ENCODE measurements at regions of chr15 and their contacts with region 1.

Region 1: GRCh38 chr15:65304389-65305144 is at the start of gene RNU5B-1:
- DNase-seq: peak; percentile 76
- ATAC-seq: peak; percentile 75
- H3K4me3 Mint-ChIP-seq: peak within 1 kb of the TSS; percentile 90
- H3K27ac Mint-ChIP-seq: peak within 1 kb of the TSS; percentile 94
- H3K4me1 Mint-ChIP-seq: peaks cover 20% of the 10 kb centered on the region
- H3K27me3 Mint-ChIP-seq: peaks cover 1% of the 10 kb centered on the region
- total RNA-seq, gene RNU5B-1: 27.2 to 27.3 TPM

Region 2: DNA sequence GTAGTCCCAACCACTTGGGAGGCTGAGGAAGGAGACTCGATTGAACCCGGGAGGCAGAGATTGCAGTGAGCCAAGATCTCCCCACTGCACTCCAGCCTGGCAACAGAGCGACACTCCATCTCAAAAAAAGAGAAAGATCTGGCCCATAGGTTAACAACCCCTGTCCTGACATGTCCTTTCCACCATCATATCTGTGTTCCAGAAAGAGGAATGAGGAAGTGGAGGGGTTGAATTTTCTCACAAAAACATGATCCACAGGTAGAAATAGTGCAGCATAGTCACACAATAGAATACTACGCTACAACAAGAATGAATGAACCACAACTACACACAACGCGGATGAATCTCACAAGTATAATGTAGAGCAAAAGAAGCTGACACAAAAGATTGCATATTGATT is 264.1 kb before region 1 on chr15:
- POLR2A ChIA-PET with region 1: no interaction called
- DNase-seq: no peak
- ATAC-seq: no peak
- H3K4me3 Mint-ChIP-seq: no peak overlapping the region
- H3K27ac Mint-ChIP-seq: no peak overlapping the region
- H3K4me1 Mint-ChIP-seq: no peaks in the 10 kb centered on the region
- H3K27me3 Mint-ChIP-seq: peaks cover 7% of the 10 kb centered on the region

Region 3: GRCh38 chr15:65184868-65185738 is 119.5 kb before region 1 on chr15 and contains the start of gene CLPX:
- POLR2A ChIA-PET with region 1: interaction called, 49 read pairs
- DNase-seq: peak; percentile 88
- ATAC-seq: peak; percentile 97
- H3K4me3 Mint-ChIP-seq: peak within 1 kb of the TSS; percentile 99
- H3K27ac Mint-ChIP-seq: peak within 1 kb of the TSS; percentile 92
- H3K4me1 Mint-ChIP-seq: peaks cover 21% of the 10 kb centered on the region
- H3K27me3 Mint-ChIP-seq: no peaks in the 10 kb centered on the region
- total RNA-seq, gene CLPX: 45.8 to 47.4 TPM

Region 4: DNA sequence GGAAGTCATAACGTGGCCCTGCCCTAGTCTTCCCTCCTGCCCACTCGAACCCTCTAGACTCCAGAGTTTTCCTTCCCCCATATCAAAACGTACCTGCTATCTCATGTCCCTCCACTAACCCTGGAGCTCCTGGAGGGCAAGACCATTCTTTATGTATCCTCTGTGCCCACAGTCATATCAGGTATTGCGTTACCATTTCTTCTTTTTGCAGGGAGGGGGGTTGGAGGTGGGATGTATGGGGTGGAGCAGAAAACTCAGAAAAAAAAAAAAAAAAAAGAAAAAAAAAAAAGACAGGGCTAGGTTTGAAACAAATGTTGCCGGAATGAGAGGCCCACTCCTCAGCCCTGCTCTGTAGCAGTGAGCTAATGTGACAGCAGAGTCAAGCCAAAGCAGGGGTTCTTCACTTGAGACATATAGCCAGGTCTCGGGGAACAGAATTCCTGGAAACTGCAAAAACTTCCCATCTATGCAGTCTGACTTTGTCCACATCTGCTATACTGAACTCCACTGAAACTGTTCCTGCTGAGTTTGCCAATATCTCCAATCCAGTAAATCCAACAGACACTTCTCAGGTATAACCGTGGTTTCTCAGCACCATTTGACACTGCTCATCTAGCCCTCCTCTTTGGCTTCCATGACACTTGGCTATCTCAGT is 49.0 kb before region 1 on chr15:
- POLR2A ChIA-PET with region 1: no interaction called
- DNase-seq: no peak
- ATAC-seq: no peak
- H3K4me3 Mint-ChIP-seq: no peak overlapping the region
- H3K27ac Mint-ChIP-seq: no peak overlapping the region
- H3K4me1 Mint-ChIP-seq: peaks cover 2% of the 10 kb centered on the region
- H3K27me3 Mint-ChIP-seq: no peaks in the 10 kb centered on the region

Region 5: DNA sequence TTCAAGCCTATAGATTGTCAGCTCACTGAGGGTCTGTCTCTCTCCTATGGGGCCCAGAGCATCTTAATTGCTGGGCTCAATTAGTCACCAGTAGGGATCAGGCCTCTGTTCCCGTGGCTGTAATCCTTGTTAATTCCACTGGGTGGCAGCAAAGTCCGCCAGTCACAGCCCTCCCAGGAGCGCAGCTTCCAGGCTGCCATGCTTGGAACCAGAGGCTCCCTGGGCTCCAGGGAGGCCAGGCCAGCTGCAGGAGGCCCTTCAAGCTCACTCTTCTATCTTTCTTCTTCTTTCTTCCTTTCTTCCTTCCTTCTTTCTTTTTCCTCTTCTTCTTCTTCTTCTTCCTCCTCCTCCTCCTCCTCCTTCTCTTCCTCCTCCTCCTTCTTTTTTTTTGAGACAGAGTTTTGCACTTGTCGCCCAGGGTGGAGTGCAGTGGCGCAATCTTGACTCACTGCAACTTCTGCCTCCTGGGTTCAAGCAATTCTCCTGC is 14.3 kb after region 1 on chr15:
- POLR2A ChIA-PET with region 1: interaction called, 23 read pairs
- DNase-seq: peak; percentile 75
- ATAC-seq: peak; percentile 96
- H3K4me3 Mint-ChIP-seq: no peak overlapping the region
- H3K27ac Mint-ChIP-seq: no peak overlapping the region
- H3K4me1 Mint-ChIP-seq: no peaks in the 10 kb centered on the region
- H3K27me3 Mint-ChIP-seq: peaks cover 24% of the 10 kb centered on the region

Region 6: DNA sequence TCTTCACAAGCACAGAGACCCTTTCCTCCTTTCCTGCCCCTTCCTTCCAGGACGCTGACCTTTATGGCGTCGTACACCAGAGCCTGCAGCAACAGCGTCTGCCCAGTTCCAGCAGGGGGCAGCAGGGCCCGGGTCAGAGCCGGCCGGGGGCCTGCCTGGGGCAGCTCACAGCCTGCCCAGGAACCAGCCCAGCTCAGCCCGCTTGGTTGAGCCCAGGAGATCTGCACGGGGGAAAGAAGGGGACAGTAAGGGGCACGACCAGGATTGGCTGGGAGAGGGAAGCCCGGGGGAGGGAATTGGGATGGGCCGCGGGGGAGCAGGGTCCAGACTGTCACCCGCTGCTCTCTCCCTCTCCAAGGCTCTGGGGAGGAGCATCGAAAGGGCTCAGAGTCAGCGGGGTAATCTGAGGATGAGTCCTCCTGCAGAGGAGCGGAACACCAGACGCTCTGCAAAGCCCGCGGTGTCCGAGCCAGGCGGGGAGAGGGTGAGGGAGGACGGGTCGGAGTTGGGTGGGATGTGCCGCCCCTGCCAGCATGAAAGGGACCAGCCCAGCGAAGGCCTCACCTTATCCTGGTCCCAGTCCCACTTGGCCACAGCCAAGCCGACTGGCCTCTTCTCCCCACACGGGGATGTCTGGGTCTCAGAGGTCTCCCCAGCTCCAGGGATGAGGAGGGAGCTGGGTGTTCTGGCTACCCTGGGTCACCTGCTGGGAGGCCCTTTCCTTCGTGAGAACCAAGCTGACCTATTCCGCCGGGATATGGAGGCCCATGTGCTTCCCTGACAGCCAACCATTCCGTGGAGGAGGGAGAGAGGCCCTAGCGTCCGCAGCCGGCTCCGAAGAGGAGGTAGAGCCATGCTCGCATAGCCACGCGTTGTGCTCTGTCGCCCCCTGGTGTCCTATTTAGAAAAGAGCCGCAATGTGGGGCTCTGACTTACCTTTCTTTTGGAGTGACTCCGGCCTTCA is 80.6 kb after region 1 on chr15:
- POLR2A ChIA-PET with region 1: interaction called, 10 read pairs
- DNase-seq: peak; percentile 82
- ATAC-seq: peak; percentile 83
- H3K4me3 Mint-ChIP-seq: peak overlapping the region; percentile 88
- H3K27ac Mint-ChIP-seq: peak overlapping the region; percentile 55
- H3K4me1 Mint-ChIP-seq: peaks cover 6% of the 10 kb centered on the region
- H3K27me3 Mint-ChIP-seq: peaks cover 32% of the 10 kb centered on the region